OCI-LY7 (cell line): ENCODE measurements at regions of chr1 and their contacts with region 1.

Region 1: GRCh38 chr1:204989266-204990058 is 53.5 kb upstream of the CNTN2 start:
- DNase-seq: peak; percentile 65
- H3K4me3 ChIP-seq: no peak overlapping the region
- H3K27ac ChIP-seq: no peak overlapping the region
- H3K4me1 ChIP-seq: no peaks in the 10 kb centered on the region
- CTCF ChIP-seq: peak; percentile 91

Region 2: DNA sequence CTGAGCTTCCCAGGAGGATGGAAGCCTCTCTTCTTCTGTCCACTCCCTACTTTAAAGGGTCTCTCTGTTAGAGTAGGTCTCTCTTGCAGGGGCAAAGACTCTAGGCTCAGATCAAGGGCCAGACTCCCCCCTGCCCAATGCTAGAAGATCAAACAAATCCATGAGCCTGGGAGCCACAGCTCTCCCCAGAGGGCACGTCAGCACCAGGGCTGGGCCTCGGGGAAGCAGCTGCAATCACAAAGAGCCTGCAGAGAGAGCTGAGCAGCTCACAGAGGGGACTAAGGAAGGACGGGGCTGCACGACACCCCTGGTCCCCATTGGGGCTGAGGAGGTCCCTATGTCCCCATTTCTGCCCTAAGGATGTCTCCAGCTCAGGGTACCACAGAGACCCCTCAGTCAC is 57.4 kb after region 1 on chr1:
- CTCF ChIA-PET with region 1: no interaction called
- POLR2A ChIA-PET with region 1: no interaction called
- intact Hi-C with region 1: no loop called
- DNase-seq: no peak
- H3K4me3 ChIP-seq: no peak overlapping the region
- H3K27ac ChIP-seq: no peak overlapping the region
- H3K4me1 ChIP-seq: no peaks in the 10 kb centered on the region
- CTCF ChIP-seq: no peak

Region 3: DNA sequence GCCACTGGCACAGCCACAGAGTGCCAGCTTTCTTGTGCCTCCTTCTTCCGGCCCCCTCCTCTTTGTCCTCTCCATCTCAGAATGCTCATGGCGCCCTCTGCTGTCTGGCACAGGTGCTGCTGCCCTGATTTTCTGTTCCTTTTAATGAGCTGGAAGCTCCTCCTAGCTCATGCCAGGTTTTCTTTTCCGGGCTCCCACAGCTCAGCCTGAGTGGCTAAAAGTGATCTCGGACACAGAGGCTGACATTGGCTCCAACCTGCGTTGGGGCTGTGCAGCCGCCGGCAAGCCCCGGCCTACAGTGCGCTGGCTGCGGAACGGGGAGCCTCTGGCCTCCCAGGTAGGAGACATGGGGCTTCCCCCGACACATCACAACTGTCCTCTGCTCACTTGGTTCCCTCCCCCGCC is 72.2 kb after region 1 on chr1:
- CTCF ChIA-PET with region 1: interaction called, 9 read pairs
- POLR2A ChIA-PET with region 1: no interaction called
- intact Hi-C with region 1: loop called (anchors 1 kb)
- DNase-seq: peak; percentile 68
- H3K4me3 ChIP-seq: no peak overlapping the region
- H3K27ac ChIP-seq: no peak overlapping the region
- H3K4me1 ChIP-seq: no peaks in the 10 kb centered on the region
- CTCF ChIP-seq: peak; percentile 92

Region 4: DNA sequence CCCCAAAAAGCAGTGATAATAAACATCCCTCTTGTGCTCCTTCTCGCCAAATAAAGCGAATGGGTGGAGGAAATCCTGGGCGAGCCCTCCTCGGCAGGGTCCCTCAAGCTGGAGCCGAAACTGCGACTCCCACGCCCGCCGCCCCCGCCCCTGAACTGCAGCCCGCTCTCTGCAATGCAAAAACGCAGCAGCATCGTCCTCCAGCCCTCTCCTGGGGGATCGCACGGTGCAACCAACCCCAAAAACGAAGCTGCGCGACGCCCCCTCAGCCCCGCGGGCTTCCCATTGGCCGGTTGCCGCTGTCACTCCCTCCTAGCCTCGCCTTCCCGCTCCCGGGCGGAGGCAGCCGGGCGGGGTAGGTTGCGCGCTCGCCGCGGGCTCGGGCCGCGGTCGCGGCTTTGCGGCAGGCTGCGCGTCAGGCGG is 238.1 kb after region 1 on chr1 and contains the start of gene TMCC2:
- CTCF ChIA-PET with region 1: no interaction called
- POLR2A ChIA-PET with region 1: no interaction called
- intact Hi-C with region 1: loop called (anchors 1 kb)
- DNase-seq: peak; percentile 94
- H3K4me3 ChIP-seq: peak within 1 kb of the TSS; percentile 77
- H3K27ac ChIP-seq: peak within 1 kb of the TSS; percentile 17
- H3K4me1 ChIP-seq: peaks cover 28% of the 10 kb centered on the region
- CTCF ChIP-seq: no peak
- total RNA-seq, gene TMCC2: 7.0 and 7.8 TPM in 2 replicates